ENCODE measurements at regions of chr2 and their contacts with region 1.

Region 1: DNA sequence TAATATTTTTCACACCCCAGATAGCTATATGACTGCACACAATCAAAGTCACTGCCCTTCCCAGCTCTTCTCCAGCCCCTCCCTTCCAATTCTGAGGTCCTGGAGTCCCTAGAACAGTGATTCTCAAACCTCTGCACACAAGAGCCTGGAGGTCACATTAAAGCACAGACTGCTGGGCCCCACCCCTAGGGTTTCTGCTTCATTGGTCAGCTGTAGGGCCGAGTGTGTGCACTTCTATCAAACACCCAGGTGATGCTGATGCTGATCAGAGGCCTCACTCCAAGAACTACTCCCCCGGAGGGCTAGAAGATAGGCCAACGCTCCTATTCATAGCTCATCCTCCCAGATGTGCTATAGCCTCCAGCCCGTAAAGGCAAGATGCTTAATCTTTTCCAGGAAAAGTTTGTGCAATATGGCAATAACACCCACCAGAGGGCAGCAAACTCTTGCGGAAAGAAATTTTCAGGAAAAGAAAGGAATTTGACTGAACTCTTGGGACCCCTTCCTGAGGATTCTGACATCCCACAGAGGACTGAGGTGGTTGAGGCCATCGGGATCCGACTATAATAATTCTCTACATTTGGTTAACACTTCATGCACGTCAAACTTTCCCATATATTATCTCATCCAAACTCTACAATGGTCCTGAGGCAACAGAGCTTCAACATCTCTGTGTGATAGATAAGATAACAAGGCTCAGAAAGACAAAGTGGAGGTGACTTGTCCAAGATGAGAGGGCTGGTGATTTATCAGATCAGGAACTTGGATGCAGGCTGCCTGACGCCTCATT is 194.2 kb upstream of the PKDCC start:
- H3K4me3 Mint-ChIP-seq: no peak overlapping the region
- H3K27ac Mint-ChIP-seq: no peak overlapping the region
- H3K4me1 Mint-ChIP-seq: no peaks in the 10 kb centered on the region
- H3K27me3 Mint-ChIP-seq: peaks cover 18% of the 10 kb centered on the region

Region 2: GRCh38 chr2:42086500-42086953 is 232.9 kb after region 1 on chr2:
- intact Hi-C with region 1: loop called (anchors 1 kb)
- H3K4me3 Mint-ChIP-seq: no peak overlapping the region
- H3K27ac Mint-ChIP-seq: no peak overlapping the region
- H3K4me1 Mint-ChIP-seq: peaks cover 6% of the 10 kb centered on the region
- H3K27me3 Mint-ChIP-seq: peaks cover 17% of the 10 kb centered on the region

Region 3: GRCh38 chr2:42328148-42328833 is 474.7 kb after region 1 on chr2:
- intact Hi-C with region 1: no loop called
- H3K4me3 Mint-ChIP-seq: no peak overlapping the region
- H3K27ac Mint-ChIP-seq: no peak overlapping the region
- H3K4me1 Mint-ChIP-seq: no peaks in the 10 kb centered on the region
- H3K27me3 Mint-ChIP-seq: no peaks in the 10 kb centered on the region